Activated B cell treated with CpG ODN at 0.5 μM for 24 hours (primary cell): ENCODE measurements at regions of chr3 and their contacts with region 1.

Region 1: DNA sequence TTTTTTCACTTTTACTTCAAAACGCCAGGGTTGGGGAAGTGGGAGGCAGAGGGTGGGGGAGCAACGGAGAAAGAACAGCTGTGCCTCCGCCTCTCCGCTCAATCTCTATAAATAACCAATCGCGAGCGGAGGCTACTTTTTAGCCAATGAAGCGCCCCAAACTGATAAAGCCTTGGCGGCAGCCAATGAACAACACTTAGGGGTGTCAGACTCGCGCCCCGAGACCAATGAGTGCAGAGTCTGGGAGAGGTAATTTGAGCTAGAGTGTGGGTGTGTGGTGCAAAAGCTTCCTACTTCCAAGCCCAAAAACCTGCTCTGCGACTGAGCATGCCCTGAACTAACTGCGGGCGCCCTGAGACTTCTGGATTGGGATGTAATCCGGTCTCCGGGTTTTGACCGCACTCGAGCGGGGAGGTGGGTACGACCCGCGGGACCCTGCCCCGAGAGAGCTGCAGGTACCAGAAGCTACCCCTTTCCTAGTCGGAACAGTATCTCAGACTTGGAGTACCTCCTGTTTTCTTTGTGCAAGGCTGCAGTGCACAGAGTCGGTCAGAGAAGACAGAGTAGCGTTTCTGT is 800 bp upstream of the RAP2B start:
- DNase-seq: peak; percentile 68
- ATAC-seq: peak; percentile 77
- H3K4me3 Mint-ChIP-seq: peak overlapping the region; percentile 97
- H3K27ac Mint-ChIP-seq: peak overlapping the region; percentile 97
- H3K4me1 Mint-ChIP-seq: peaks cover 43% of the 10 kb centered on the region
- H3K27me3 Mint-ChIP-seq: no peaks in the 10 kb centered on the region
- CTCF ChIP-seq: no peak

Region 2: DNA sequence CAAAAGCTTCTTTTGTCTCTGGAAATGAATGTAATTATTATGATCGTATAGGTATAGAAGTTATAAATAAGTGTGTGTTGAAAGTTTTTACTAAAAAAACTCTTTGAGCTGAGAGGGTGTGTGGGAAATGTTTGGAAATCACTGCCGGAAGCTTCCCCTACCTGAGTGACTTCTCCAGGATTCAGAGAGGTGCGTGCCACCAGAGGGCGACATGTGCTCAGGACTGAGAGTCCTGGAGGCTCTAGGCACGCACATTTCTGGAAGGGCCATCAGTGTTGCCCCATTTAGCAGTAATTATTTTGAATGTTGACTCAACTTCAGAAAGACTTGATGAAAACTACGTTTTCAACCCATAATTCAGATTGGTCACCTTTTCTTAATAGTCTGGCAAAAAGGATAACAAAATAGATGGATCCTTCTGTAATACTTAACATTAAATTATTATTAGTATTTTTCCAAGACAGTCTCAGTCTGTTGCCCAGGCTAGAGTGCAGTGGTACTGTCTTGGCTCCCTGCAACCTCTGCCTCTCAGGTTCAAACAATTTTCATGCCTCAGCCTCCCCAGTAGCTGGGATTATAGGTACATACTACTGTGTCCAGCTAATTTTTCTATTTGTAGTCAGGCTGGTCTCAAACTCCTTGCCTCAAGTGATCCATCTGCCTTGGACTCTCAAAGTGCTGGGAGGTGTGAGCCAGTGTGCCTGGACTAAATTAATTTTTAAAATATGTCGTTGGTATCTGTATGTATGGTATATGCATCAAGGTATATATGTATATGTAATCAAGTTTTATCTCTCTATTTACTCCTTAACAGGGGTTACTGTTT is 1992.7 kb before region 1 on chr3:
- CTCF ChIA-PET with region 1: no interaction called
- POLR2A ChIA-PET with region 1: no interaction called
- intact Hi-C with region 1: loop called (anchors 5 kb)
- DNase-seq: peak; percentile 54
- ATAC-seq: no peak
- H3K4me3 Mint-ChIP-seq: no peak overlapping the region
- H3K27ac Mint-ChIP-seq: no peak overlapping the region
- H3K4me1 Mint-ChIP-seq: peaks cover 43% of the 10 kb centered on the region
- H3K27me3 Mint-ChIP-seq: no peaks in the 10 kb centered on the region
- CTCF ChIP-seq: peak; percentile 65

Region 3: GRCh38 chr3:151384741-151385174 is 1776.5 kb before region 1 on chr3 and contains the start of gene P2RY12:
- CTCF ChIA-PET with region 1: no interaction called
- POLR2A ChIA-PET with region 1: interaction called, 3 read pairs
- intact Hi-C with region 1: loop called (anchors 5 kb)
- DNase-seq: no peak
- ATAC-seq: peak; percentile 29
- H3K4me3 Mint-ChIP-seq: peak within 1 kb of the TSS; percentile 79
- H3K27ac Mint-ChIP-seq: peak within 1 kb of the TSS; percentile 97
- H3K4me1 Mint-ChIP-seq: peaks cover 76% of the 10 kb centered on the region
- H3K27me3 Mint-ChIP-seq: no peaks in the 10 kb centered on the region
- CTCF ChIP-seq: no peak
- total RNA-seq, gene P2RY12: 0.58 and 0.64 TPM in 2 replicates

Region 4: DNA sequence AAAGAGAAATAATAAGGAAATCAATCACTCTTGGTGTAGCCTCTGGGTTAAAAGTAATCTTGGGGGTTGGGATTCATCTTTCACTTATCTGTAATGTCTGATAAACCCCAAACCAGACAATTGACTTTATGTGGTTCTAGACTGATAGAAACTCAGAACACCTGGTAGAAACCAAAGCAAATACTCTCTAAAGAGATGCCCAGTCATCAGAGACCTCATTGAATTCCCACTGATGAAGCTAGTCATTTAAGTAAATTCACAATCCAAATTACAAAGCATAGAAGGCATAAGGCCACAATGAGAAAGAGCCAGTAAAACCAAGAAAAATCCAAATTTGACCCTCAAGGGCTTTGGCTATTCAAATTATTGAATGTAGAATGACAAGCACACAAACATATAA is 641.9 kb before region 1 on chr3:
- CTCF ChIA-PET with region 1: no interaction called
- POLR2A ChIA-PET with region 1: no interaction called
- intact Hi-C with region 1: loop called (anchors 5 kb)
- DNase-seq: no peak
- ATAC-seq: no peak
- H3K4me3 Mint-ChIP-seq: no peak overlapping the region
- H3K27ac Mint-ChIP-seq: peak overlapping the region; percentile 76
- H3K4me1 Mint-ChIP-seq: peaks cover 79% of the 10 kb centered on the region
- H3K27me3 Mint-ChIP-seq: no peaks in the 10 kb centered on the region
- CTCF ChIP-seq: no peak

Region 5: DNA sequence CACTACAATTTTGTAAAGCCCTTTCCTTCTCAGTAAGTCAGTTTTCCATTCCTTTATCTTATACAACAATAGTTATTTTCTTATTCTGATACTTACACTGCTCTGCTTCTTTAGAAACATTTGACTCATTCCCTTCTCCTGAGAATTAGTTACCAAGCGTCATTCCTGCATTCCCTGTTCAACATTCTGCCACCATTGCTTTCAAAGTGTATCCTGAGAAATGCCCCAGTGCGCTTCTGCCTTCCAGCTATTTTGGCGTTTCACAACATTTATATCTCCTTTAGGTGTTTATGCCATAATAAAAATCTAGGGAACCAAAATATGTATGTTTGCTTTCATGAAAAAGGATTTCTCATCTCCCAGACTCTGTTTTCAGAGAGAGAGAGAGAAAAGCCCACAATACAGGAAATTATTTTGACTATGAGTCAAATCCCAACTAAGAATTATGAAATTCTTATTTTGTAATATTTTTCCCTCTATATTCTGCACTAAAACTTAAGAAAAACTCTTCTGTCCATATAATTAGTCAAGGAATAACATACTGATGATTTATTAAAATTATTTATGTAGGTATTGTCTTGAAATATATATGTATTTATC is 117.4 kb before region 1 on chr3:
- CTCF ChIA-PET with region 1: interaction called, 4 read pairs
- POLR2A ChIA-PET with region 1: interaction called, 7 read pairs
- intact Hi-C with region 1: loop called (anchors 2 kb)
- DNase-seq: no peak
- ATAC-seq: no peak
- H3K4me3 Mint-ChIP-seq: no peak overlapping the region
- H3K27ac Mint-ChIP-seq: no peak overlapping the region
- H3K4me1 Mint-ChIP-seq: peaks cover 1% of the 10 kb centered on the region
- H3K27me3 Mint-ChIP-seq: peaks cover 6% of the 10 kb centered on the region
- CTCF ChIP-seq: no peak

Region 6: DNA sequence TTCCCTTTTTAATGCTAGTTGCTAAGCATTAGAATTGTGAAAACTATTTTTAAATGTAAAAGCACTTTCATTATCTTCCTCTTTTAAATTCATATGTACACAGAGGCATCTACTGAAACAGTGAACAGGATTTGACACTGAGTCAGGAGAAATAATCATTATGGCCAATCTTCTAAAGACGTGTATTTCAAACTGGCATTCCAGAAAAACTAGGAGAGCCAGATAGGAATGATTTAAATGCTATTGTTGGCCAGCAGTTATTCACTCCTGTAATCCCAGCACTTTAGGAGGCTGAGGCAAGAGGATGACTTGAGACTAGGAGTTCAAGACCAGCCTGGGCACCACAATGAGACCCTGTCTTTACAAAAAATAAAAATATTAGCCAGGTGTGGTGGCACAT is 66.8 kb before region 1 on chr3:
- CTCF ChIA-PET with region 1: no interaction called
- POLR2A ChIA-PET with region 1: no interaction called
- intact Hi-C with region 1: no loop called
- DNase-seq: no peak
- ATAC-seq: no peak
- H3K4me3 Mint-ChIP-seq: no peak overlapping the region
- H3K27ac Mint-ChIP-seq: no peak overlapping the region
- H3K4me1 Mint-ChIP-seq: no peaks in the 10 kb centered on the region
- H3K27me3 Mint-ChIP-seq: no peaks in the 10 kb centered on the region
- CTCF ChIP-seq: no peak

Region 7: GRCh38 chr3:153768561-153769469 is 607.6 kb after region 1 on chr3:
- CTCF ChIA-PET with region 1: no interaction called
- POLR2A ChIA-PET with region 1: interaction called, 7 read pairs
- intact Hi-C with region 1: loop called (anchors 1 kb)
- DNase-seq: no peak
- ATAC-seq: peak; percentile 77
- H3K4me3 Mint-ChIP-seq: no peak overlapping the region
- H3K27ac Mint-ChIP-seq: no peak overlapping the region
- H3K4me1 Mint-ChIP-seq: no peaks in the 10 kb centered on the region
- H3K27me3 Mint-ChIP-seq: peaks cover 3% of the 10 kb centered on the region
- CTCF ChIP-seq: peak; percentile 15

Region 8: GRCh38 chr3:154323891-154324738 is 1162.9 kb after region 1 on chr3 and contains the start of gene DHX36:
- CTCF ChIA-PET with region 1: no interaction called
- POLR2A ChIA-PET with region 1: interaction called, 5 read pairs
- intact Hi-C with region 1: loop called (anchors 1 kb)
- DNase-seq: peak; percentile 83
- ATAC-seq: peak; percentile 88
- H3K4me3 Mint-ChIP-seq: peak within 1 kb of the TSS; percentile 95
- H3K27ac Mint-ChIP-seq: peak within 1 kb of the TSS; percentile 97
- H3K4me1 Mint-ChIP-seq: peaks cover 31% of the 10 kb centered on the region
- H3K27me3 Mint-ChIP-seq: no peaks in the 10 kb centered on the region
- CTCF ChIP-seq: no peak
- total RNA-seq, gene DHX36: 95.9 and 110 TPM in 2 replicates